CD4-positive, alpha-beta memory T cell (primary cell): ENCODE measurements at regions of chr2 and their contacts with region 1.

Region 1: GRCh38 chr2:74334931-74335333 is 8.3 kb downstream of the SLC4A5 start:
- DNase-seq: peak; percentile 65 to 72 (median 69)
- H3K4me3 ChIP-seq: no peak overlapping the region
- H3K4me3 Mint-ChIP-seq: no peak overlapping the region
- H3K27ac ChIP-seq: no peak overlapping the region
- H3K27ac Mint-ChIP-seq: peak overlapping the region in 1 of 7 donors; percentile 37
- H3K4me1 ChIP-seq: peaks cover 15% of the 10 kb centered on the region
- H3K4me1 Mint-ChIP-seq: peaks cover 0 to 7% (median 7%) of the 10 kb centered on the region in 4 donors
- H3K27me3 ChIP-seq: no peaks in the 10 kb centered on the region
- H3K27me3 Mint-ChIP-seq: no peaks in the 10 kb centered on the region

Region 2: GRCh38 chr2:74147727-74148456 is 187.0 kb before region 1 on chr2 and contains the start of gene BOLA3:
- CTCF ChIA-PET with region 1: interaction called, 4 read pairs
- POLR2A ChIA-PET with region 1: no interaction called
- intact Hi-C with region 1: loop called (anchors 10 kb)
- DNase-seq: peak; percentile 72 to 79 (median 72)
- H3K4me3 ChIP-seq: peak within 1 kb of the TSS; percentile 58 to 63
- H3K4me3 Mint-ChIP-seq: no peak within 1 kb of the TSS
- H3K27ac ChIP-seq: peak within 1 kb of the TSS; percentile 59
- H3K27ac Mint-ChIP-seq: no peak within 1 kb of the TSS
- H3K4me1 ChIP-seq: peaks cover 18% of the 10 kb centered on the region
- H3K4me1 Mint-ChIP-seq: peaks cover 0 to 6% (median 4%) of the 10 kb centered on the region in 4 donors
- H3K27me3 ChIP-seq: no peaks in the 10 kb centered on the region
- H3K27me3 Mint-ChIP-seq: no peaks in the 10 kb centered on the region
- total RNA-seq, gene BOLA3: 16.4 to 19.0 TPM

Region 3: DNA sequence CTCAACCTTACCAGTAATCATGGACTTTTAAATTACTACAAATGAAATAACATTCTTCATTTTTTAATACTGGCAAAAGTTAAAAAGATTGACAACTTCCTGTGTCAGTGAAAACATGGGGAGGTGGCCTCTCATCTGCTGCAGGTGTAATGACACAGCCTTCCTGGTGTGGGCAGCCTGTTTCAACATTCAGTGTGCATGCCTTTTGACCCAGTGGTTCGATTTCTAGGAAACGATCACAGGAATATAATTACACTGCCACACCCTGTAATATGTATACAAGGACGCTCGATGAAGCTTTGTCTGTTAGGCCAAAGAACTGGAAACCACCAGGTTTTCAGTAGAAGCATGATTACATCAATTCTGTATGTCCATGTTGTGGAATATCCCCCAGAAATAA is 67.9 kb before region 1 on chr2:
- CTCF ChIA-PET with region 1: interaction called, 153 read pairs
- POLR2A ChIA-PET with region 1: interaction called, 4 read pairs
- intact Hi-C with region 1: loop called (anchors 1 kb)
- DNase-seq: peak; percentile 66 to 73 (median 70)
- H3K4me3 ChIP-seq: no peak overlapping the region
- H3K4me3 Mint-ChIP-seq: peak overlapping the region; percentile 11 to 77 (median 65)
- H3K27ac ChIP-seq: no peak overlapping the region
- H3K27ac Mint-ChIP-seq: peak overlapping the region in 6 of 7 donors; percentile 14 to 81 (median 70)
- H3K4me1 ChIP-seq: peaks cover 20% of the 10 kb centered on the region
- H3K4me1 Mint-ChIP-seq: peaks cover 14 to 23% (median 18%) of the 10 kb centered on the region in 4 donors
- H3K27me3 ChIP-seq: no peaks in the 10 kb centered on the region
- H3K27me3 Mint-ChIP-seq: no peaks in the 10 kb centered on the region

Region 4: GRCh38 chr2:74307720-74308119 is 27.2 kb before region 1 on chr2:
- CTCF ChIA-PET with region 1: interaction called, 12 read pairs
- POLR2A ChIA-PET with region 1: no interaction called
- intact Hi-C with region 1: no loop called
- DNase-seq: no peak
- H3K4me3 ChIP-seq: no peak overlapping the region
- H3K4me3 Mint-ChIP-seq: no peak overlapping the region
- H3K27ac ChIP-seq: no peak overlapping the region
- H3K27ac Mint-ChIP-seq: no peak overlapping the region
- H3K4me1 ChIP-seq: no peaks in the 10 kb centered on the region
- H3K4me1 Mint-ChIP-seq: peaks cover 0 to 1% (median under 1%) of the 10 kb centered on the region in 4 donors
- H3K27me3 ChIP-seq: no peaks in the 10 kb centered on the region
- H3K27me3 Mint-ChIP-seq: no peaks in the 10 kb centered on the region

Region 5: DNA sequence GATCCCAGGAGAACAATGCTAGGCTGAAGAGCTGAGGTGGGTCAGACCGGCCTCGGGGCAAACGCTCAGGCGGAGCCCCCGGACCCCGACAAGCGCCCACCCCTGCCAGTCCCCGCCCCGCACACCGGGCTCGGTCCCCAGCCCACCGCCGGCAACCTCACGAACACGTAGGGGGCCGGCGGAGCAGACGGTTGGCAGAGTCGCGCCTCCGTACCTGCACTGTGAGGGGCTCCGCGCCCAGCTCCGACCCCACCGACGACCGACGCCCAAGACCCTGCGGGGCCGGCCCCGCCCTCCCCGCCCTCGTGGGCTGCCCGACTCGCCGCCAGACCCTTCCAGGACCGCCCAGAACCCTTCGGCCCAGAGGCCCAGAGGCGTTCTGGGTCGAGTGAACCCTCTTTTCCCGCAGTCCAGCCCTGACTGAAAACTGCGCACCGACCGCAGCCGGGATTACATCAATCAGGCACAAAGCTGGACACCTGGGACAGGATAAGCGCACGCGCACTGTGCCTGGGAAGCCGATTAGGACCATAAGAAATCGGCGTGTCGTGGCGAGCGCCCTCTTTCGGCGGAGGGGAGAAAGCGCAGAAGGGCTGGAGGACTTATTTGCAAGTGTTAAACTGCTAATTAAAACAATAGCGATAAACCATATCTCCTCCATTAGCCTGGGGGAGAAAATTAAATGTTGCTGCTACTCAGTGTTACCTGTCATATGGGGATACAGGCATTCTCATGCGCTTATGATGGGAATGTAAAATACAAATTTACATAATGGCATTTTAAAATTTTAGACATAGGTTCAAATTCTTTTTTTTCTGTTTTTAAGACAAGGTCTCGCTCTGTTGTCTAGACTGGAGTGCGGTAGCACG is 56.9 kb after region 1 on chr2:
- CTCF ChIA-PET with region 1: interaction called, 22 read pairs
- POLR2A ChIA-PET with region 1: no interaction called
- intact Hi-C with region 1: no loop called
- DNase-seq: peak; percentile 92 to 96 (median 94)
- H3K4me3 ChIP-seq: peak overlapping the region; percentile 84 to 90
- H3K4me3 Mint-ChIP-seq: peak overlapping the region in 5 of 8 donors; percentile 96 to 99 (median 97)
- H3K27ac ChIP-seq: peak overlapping the region; percentile 88
- H3K27ac Mint-ChIP-seq: peak overlapping the region in 6 of 7 donors; percentile 99 to 100 (median 100)
- H3K4me1 ChIP-seq: peaks cover 27% of the 10 kb centered on the region
- H3K4me1 Mint-ChIP-seq: peaks cover 5 to 13% (median 6%) of the 10 kb centered on the region in 4 donors
- H3K27me3 ChIP-seq: no peaks in the 10 kb centered on the region
- H3K27me3 Mint-ChIP-seq: peaks cover 0 to 5% of the 10 kb centered on the region in 2 donors